ENCODE measurements at regions of chr3 and their contacts with region 1.

Region 1: DNA sequence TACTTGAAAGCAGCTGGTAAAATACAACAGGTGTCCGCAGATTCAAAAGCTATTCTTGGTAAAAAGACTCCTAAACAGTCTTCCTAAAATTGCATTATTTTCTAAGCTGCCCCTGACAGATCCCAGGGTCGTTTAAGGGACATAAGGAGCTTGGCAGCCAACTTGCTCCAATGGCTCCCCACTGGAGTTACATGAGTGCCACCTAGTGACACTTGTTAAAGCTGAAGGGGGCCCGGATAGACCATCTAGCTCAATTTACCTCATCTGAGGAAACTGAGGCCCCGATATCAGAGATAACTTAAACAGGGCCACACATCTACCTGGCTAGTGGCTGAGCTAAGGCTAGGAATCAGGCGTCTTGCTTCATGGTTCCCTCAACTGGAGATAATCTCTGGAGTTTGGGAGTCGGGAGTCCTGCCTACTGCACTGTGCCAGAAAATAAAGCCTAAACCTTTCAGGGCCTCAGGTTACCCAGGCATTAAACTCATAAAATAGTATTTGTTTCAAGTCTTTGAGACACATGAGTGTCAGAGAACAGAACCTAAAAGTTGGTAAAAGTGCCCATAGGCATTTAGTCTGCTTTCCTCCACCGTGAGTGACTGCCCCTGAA is 6.5 kb upstream of the TBC1D23 start:
- DNase-seq: peak; percentile 58 to 84 (median 69)
- H3K4me3 ChIP-seq: no peak overlapping the region
- H3K27ac ChIP-seq: no peak overlapping the region
- H3K4me1 ChIP-seq: peaks cover 0 to 8% of the 10 kb centered on the region in 2 donors
- H3K27me3 ChIP-seq: no peaks in the 10 kb centered on the region
- CTCF ChIP-seq: peak; percentile 65 to 87 (median 77)
- POLR2A ChIP-seq: no peak

Region 2: GRCh38 chr3:99833617-99834205 is 420.6 kb before region 1 on chr3:
- intact Hi-C with region 1: loop called in 1 of 2 experiments (anchors 5 kb)
- DNase-seq: peak in 5 of 7 donors; percentile 31 to 48 (median 39)
- H3K4me3 ChIP-seq: no peak overlapping the region
- H3K27ac ChIP-seq: peak overlapping the region in 4 of 5 donors; percentile 18 to 41 (median 30)
- H3K4me1 ChIP-seq: peaks cover 8 to 18% of the 10 kb centered on the region in 2 donors
- H3K27me3 ChIP-seq: no peaks in the 10 kb centered on the region
- CTCF ChIP-seq: no peak
- POLR2A ChIP-seq: no peak

Region 3: GRCh38 chr3:99842826-99843589 is 411.3 kb before region 1 on chr3:
- intact Hi-C with region 1: loop called (anchors 5 kb)
- DNase-seq: no peak
- H3K4me3 ChIP-seq: no peak overlapping the region
- H3K27ac ChIP-seq: peak overlapping the region in 1 of 5 donors; percentile 6
- H3K4me1 ChIP-seq: peaks cover 0 to 32% of the 10 kb centered on the region in 2 donors
- H3K27me3 ChIP-seq: no peaks in the 10 kb centered on the region
- CTCF ChIP-seq: peak; percentile 63 to 83 (median 77)
- POLR2A ChIP-seq: no peak

Region 4: DNA sequence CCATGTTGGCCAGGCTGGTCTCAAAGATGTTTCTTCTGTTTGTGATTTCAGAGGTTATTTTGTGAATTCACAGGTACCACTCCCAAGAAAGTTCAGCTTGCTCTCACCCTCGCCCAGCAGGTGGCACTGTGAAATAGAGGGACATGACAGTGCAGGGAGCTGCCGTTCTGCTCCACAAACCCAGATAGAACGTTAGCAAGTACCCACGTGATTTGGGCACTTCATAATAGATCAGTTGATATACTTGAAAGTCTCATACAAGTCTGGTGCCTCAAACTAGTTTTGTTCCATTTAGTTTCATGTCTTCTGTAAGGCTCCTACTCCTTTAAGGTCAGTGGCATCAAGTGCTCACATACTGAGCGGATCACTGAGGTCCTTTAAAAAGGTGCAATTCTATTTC is 185.4 kb before region 1 on chr3:
- intact Hi-C with region 1: loop called (anchors 5 kb)
- DNase-seq: peak; percentile 79 to 95 (median 82)
- H3K4me3 ChIP-seq: no peak overlapping the region
- H3K27ac ChIP-seq: no peak overlapping the region
- H3K4me1 ChIP-seq: peaks cover 0 to 14% of the 10 kb centered on the region in 2 donors
- H3K27me3 ChIP-seq: no peaks in the 10 kb centered on the region
- CTCF ChIP-seq: peak; percentile 55 to 86 (median 76)
- POLR2A ChIP-seq: no peak

Region 5: GRCh38 chr3:100400780-100401673 is 146.8 kb after region 1 on chr3 and contains the starts of genes LNP1 and TOMM70:
- intact Hi-C with region 1: no loop called
- DNase-seq: peak; percentile 95 to 100 (median 99)
- H3K4me3 ChIP-seq: peak within 1 kb of the TSS; percentile 79 to 94 (median 86)
- H3K27ac ChIP-seq: peak within 1 kb of the TSS; percentile 65 to 94 (median 85)
- H3K4me1 ChIP-seq: peaks cover 28 to 54% of the 10 kb centered on the region in 2 donors
- H3K27me3 ChIP-seq: no peaks in the 10 kb centered on the region
- CTCF ChIP-seq: peak in 1 of 6 experiments; percentile 13
- POLR2A ChIP-seq: peak; percentile 75 to 92
- total RNA-seq, gene LNP1: 0.91 to 6.5 (median 2.5) TPM
- total RNA-seq, gene TOMM70: 25.7 to 67.4 (median 40.4) TPM

Measured in adrenal gland (tissue), 19 donors.